Naive thymus-derived CD8-positive, alpha-beta T cell (primary cell): ENCODE measurements at regions of chrX and their contacts with region 1.

Region 1: DNA sequence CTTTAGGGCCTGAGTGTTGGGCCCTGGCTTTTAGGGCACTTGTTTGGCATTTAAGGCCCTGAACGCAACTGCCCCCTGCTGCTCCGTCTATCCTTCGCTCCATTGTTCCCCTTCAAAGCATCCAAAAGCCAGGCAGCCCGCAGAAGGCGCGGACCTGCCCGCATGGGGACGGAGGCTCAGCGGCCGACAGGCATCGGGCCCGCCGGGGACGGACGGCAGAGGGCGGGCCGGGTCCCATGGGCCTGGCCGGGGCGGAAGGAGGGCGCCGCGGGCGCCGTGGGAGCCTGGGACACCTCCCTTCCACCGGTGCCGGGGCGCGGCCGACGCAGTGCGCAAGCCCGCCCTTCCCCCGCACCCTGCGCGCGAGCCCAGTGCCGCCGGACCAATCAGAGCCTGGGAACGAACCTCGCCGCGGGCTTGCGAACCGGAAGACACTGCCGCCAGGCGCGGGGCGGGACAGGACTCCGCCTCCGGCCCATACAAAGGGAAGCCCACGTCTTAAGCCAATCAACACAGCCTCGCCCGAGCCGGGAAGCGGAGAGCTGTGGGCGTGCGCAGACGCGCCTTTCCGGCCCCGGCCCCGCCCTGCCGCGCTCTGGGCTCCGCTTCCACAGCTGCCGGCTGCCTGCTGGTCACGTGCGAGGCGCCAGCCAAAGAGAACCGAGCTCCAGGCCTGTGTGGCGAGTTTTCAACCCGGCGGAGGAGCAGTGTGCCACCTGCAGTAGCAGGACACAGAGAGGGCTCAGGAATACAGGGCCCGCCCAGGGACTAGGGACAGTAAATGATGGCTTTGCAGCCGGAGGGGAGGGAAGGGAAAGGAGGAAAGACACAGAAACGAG is 2.1 kb upstream of the ARHGAP4 start:
- DNase-seq: peak; percentile 82 to 97 (median 92)
- ATAC-seq: peak; percentile 70 to 73
- H3K4me3 Mint-ChIP-seq: peak overlapping the region; percentile 82 to 97 (median 91)
- H3K27ac Mint-ChIP-seq: peak overlapping the region; percentile 94 to 100 (median 99)
- H3K4me1 Mint-ChIP-seq: peaks cover 8 to 44% (median 30%) of the 10 kb centered on the region in 4 donors
- H3K27me3 Mint-ChIP-seq: no peaks in the 10 kb centered on the region

Region 2: GRCh38 chrX:153794018-153794896 is 133.9 kb before region 1 on chrX and contains the starts of genes IDH3G and SSR4:
- POLR2A ChIA-PET with region 1: interaction called, 39 read pairs
- DNase-seq: peak; percentile 87 to 97 (median 92)
- ATAC-seq: peak; percentile 91 to 92
- H3K4me3 Mint-ChIP-seq: peak within 1 kb of the TSS; percentile 86 to 95 (median 92)
- H3K27ac Mint-ChIP-seq: peak within 1 kb of the TSS; percentile 82 to 96 (median 94)
- H3K4me1 Mint-ChIP-seq: peaks cover 7 to 41% (median 26%) of the 10 kb centered on the region in 4 donors
- H3K27me3 Mint-ChIP-seq: no peaks in the 10 kb centered on the region
- polyA plus RNA-seq, gene IDH3G: 71.9 to 109 (median 100) TPM
- polyA plus RNA-seq, gene SSR4: 389 to 522 (median 451) TPM

Region 3: DNA sequence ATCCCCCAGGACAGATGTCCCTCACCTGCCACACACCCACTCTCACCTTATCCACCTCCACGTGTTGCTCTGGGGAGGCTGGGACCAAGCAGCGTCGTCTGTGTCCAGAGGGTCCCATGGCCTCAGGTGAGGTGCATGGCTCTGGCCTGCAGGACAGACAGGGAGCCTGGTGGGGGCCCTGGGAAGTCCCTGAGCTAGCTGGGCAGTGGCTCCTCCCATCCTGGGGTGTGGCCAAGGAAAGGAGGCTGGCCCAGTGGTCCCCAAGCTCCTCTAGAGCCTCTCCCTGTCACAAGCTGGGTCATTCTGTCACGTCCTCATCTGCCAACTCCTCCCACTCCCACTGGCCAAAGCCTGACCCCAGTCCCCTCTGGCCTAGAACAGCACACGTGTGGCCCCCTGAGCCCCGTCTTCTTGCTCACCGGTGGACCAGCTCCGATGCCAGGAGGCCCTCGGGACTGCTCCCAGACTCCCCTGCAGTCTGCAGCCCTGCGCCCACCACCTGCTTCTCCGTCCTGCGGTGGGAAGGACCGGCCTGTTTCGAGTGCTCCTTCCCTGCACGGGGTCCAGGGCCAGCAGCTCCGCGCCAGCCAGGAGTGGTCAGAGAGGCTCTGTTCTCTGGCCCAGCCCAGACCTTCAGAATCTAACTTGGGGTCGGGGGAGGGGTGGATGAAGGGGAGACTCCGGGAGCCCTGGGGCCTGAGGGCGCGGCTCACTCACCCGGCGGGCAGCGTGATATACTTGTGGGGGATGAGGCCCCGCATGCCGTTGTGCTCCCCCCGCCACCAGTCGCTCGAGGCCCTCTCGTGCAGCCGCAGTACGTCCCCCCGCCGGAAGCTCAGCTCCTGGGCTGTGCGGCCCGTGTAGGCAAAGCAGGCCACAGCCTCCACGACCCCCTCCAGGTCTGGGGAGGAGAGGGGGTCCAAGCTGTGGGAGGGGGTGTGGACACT is 18.8 kb before region 1 on chrX:
- POLR2A ChIA-PET with region 1: interaction called, 144 read pairs
- DNase-seq: no peak
- ATAC-seq: no peak
- H3K4me3 Mint-ChIP-seq: no peak overlapping the region
- H3K27ac Mint-ChIP-seq: no peak overlapping the region
- H3K4me1 Mint-ChIP-seq: peaks cover 8 to 35% (median 24%) of the 10 kb centered on the region in 4 donors
- H3K27me3 Mint-ChIP-seq: no peaks in the 10 kb centered on the region

Region 4: DNA sequence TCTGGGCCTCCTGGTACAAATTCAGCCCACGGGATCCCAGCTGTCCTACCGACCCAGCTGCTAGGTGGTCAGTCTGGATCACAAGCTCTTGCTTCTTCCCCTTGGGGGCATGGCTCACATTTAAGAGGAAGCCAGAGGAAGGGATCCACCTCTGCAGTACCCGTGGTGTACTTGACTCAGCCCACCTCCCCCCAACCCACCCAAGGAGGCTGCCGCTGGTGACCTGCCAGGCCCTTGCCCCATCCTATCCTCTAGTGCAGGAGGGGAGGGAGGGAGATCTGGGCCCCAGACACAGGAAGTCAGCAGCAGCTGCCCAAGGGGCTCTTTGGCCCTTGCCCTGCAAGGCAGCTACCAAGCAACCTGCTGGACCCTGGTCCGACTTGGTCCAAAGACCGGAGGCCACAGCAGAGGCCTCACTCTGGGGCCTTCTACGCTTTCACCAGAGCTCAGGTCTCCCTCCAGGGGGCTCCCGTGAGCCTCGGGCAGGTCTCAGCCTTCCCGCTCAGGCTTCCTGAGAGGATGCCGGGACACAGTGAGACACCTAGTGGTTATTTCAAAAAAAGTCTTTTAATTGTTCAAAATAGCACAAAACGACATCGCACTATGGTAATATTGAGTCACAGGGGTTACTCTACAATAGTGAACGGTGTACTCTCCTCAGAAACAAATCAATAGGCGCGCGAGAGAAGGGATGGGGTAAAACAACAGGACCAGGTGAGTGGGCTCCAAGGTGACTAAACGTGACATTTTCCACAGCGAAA is 19.0 kb after region 1 on chrX:
- POLR2A ChIA-PET with region 1: interaction called, 388 read pairs
- DNase-seq: peak; percentile 64 to 87 (median 72)
- ATAC-seq: peak; percentile 77 to 78
- H3K4me3 Mint-ChIP-seq: peak overlapping the region in 9 of 10 donors; percentile 18 to 82 (median 64)
- H3K27ac Mint-ChIP-seq: peak overlapping the region; percentile 61 to 97 (median 89)
- H3K4me1 Mint-ChIP-seq: peaks cover 3 to 41% (median 25%) of the 10 kb centered on the region in 4 donors
- H3K27me3 Mint-ChIP-seq: no peaks in the 10 kb centered on the region